GM10248 (cell line): ENCODE measurements at regions of chr6 and their contacts with region 1.

Region 1: GRCh38 chr6:14037402-14038277 is 79.9 kb upstream of the CD83 start:
- DNase-seq: no peak
- CTCF ChIP-seq: no peak

Region 2: DNA sequence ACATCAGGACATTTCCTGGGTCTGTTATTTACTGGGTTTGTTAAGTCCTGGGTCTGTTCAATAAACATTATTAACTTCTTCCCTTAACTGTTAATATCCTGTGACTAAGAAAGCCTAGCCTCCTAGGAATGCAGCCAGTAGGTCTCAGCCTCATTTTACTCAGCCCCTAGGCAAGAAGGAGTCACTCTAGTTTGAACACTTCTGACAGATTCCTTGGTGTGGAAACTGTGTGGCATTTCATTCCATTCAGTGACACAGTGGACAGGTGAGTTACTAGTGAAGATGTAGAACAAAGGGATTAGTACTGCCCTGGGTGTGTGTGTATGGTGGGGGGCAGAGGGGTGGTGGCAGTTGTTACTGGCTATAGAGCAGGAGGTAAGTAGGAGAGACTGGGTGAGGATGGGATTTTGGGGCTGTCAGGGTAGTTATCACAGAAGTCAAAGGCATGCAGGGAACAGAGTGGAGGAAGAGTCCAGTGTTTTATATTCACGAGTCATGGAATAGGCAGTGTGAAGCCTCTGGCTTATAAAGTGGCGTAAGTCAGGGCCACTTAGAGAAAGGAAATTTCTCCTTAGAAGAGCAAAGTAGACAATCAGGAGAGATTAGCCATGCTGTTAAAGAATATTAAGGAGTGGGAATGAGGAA is 84.5 kb before region 1 on chr6:
- CTCF ChIA-PET with region 1: no interaction called
- POLR2A ChIA-PET with region 1: no interaction called
- DNase-seq: no peak
- CTCF ChIP-seq: no peak

Region 3: DNA sequence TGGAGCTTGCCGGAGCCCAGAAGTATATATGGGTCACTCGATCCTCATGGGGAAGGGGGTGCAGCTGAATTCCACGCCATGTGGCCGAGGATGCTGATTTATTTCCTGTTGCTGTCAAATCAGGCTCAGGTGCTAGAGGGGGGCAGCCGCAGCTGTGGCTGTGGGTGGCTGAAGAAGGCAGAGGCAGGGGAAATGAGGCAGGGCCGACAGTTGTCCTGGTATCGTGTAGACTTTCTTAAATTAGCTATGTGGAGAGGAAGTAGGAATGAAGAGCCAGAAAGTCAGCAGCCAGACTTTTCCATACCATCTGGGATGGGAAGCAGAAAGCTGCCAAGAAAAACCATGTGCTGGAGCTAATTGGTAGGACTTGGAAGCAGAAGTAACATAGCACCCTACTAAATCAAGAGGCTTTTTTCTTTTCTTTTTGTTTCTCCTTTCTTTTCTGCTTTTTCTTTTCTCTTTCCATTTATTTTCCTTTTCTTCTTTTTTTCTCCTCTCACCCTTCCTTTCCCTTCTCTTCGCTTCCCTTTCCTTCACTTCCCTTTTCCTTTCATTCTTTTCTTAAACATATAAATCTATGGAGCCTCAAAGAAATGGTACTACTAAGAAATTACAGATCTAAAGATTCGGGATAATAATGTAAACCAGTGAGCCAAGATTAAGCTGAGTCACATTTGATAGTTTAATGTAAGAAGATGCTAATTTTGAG is 10.7 kb before region 1 on chr6:
- CTCF ChIA-PET with region 1: interaction called, 24 read pairs
- POLR2A ChIA-PET with region 1: no interaction called
- DNase-seq: no peak
- CTCF ChIP-seq: no peak